SK-N-SH (cell line): ENCODE measurements at regions of chr20 and their contacts with region 1.

Region 1: DNA sequence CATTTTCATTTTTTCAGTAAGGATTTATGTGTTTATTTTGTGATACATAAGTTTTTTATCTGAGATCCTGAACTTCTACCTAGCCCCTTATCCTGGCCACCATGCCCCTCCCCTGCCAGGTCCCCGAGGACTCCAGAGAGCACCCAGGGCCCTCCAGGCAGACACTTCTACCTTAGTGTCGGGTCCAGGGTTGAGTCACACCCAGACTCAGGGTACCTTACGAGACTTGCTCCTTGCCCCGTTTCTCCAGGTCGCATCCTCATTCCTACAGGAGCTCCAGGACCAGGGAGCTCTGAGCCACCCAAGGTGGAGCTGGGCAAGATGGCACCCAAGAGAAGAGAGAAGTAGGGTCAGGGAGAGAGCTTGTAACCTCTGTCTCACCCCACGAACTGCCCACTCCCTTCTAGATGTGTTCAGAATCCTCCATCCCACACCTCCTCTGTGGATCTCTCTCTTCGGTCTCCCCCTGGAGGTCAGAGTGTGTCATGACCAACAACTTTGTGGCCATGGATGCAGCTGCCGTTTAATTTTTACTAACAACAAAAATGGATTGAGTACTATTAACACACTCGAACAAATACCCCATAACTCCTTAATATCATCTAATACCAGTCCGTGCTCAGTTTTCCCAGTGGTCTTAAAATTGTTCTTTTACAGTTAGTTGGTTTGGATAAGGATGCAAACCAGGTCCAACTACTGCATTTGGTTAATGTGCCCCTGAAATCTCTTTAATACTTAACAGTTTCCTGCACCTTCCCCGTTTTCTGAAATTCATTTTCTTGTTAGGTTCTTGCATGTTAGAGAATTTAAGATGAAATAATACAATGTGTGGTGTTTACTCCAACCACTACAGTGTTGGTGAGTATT is 130.6 kb upstream of the INSM1 start:
- DNase-seq: peak; percentile 71
- H3K4me3 ChIP-seq: no peak overlapping the region
- H3K27ac ChIP-seq: no peak overlapping the region
- H3K4me1 ChIP-seq: peaks cover 0 to 18% of the 10 kb centered on the region in 2 experiments; a peak in 2 of 4 replicates
- H3K27me3 ChIP-seq: no peaks in the 10 kb centered on the region; the same call in 1 of the 2 replicates
- CTCF ChIP-seq: peak; percentile 72
- EP300 ChIP-seq: no peak
- RAD21 ChIP-seq: peak; percentile 83

Region 2: DNA sequence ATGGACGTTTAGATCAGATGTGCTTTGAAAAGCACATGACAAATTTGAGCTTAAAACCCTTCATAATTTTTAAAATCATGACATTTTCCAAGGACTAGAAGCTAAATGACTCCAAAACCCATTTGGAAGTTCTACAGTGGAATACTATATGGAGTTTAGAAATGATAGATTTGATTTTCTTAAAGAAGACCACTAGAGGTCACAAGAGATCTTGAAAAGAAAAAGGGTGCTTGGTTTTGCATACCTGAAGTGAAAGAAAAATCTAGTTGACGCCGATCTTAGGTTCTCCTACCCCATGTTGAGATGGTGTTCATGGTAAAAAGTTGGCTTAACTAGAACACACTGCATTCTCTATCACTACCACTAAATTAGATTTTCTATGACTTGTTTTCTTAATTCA is 153.5 kb before region 1 on chr20:
- CTCF ChIA-PET with region 1: interaction called, 77 read pairs
- POLR2A ChIA-PET with region 1: no interaction called
- DNase-seq: peak; percentile 31
- H3K4me3 ChIP-seq: no peak overlapping the region
- H3K27ac ChIP-seq: no peak overlapping the region
- H3K4me1 ChIP-seq: no peaks in the 10 kb centered on the region; a peak in 2 of 4 replicates
- H3K27me3 ChIP-seq: peaks cover 4% of the 10 kb centered on the region; the same call in 1 of the 2 replicates
- CTCF ChIP-seq: peak; percentile 69
- EP300 ChIP-seq: no peak
- RAD21 ChIP-seq: peak; percentile 84

Region 3: GRCh38 chr20:20096421-20096820 is 140.9 kb before region 1 on chr20:
- CTCF ChIA-PET with region 1: interaction called, 39 read pairs
- POLR2A ChIA-PET with region 1: no interaction called
- DNase-seq: no peak
- H3K4me3 ChIP-seq: no peak overlapping the region
- H3K27ac ChIP-seq: no peak overlapping the region
- H3K4me1 ChIP-seq: no peaks in the 10 kb centered on the region; a peak in 1 of 4 replicates
- H3K27me3 ChIP-seq: peaks cover 6% of the 10 kb centered on the region
- CTCF ChIP-seq: no peak
- EP300 ChIP-seq: no peak
- RAD21 ChIP-seq: no peak

Region 4: DNA sequence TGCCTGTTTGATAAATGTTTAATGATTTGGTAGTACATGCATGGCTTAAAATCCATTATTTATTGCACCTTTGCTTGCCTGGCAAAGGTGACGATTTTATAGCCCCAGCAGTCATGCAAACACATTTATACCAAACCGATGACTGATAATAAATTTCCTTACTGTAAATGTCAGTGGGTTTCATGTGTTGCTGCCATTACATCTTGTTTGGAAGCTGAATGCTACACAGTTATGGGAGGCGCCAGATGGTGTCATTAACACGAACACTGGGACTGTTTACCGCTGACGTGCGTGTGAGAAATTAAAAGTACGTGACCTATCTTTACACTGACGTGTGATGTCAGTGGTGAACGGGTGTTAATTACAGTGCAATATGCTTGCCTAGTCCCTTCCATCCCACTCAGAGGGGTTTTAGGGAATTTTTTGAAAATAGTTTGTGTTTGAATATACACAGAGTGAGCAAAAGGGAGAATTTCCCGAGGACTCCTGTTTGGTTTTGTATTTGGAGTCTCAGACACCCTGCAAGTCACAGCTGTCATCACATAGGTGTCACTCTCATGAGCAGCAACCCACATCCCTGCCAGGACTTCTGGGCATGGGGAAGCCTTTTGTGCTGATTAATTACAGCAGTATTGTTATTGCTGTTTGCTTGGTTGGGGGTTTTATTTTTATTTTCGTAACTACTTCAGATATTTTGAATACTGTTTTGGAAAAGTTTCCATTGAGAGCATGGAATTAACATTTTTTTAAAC is 21.2 kb before region 1 on chr20:
- CTCF ChIA-PET with region 1: interaction called, 41 read pairs
- POLR2A ChIA-PET with region 1: no interaction called
- DNase-seq: no peak
- H3K4me3 ChIP-seq: no peak overlapping the region
- H3K27ac ChIP-seq: no peak overlapping the region
- H3K4me1 ChIP-seq: no peaks in the 10 kb centered on the region
- H3K27me3 ChIP-seq: no peaks in the 10 kb centered on the region
- CTCF ChIP-seq: no peak
- EP300 ChIP-seq: no peak
- RAD21 ChIP-seq: no peak

Region 5: GRCh38 chr20:20248620-20249200 is 11.4 kb after region 1 on chr20:
- CTCF ChIA-PET with region 1: interaction called, 55 read pairs
- POLR2A ChIA-PET with region 1: no interaction called
- DNase-seq: no peak
- H3K4me3 ChIP-seq: no peak overlapping the region
- H3K27ac ChIP-seq: no peak overlapping the region
- H3K4me1 ChIP-seq: peaks cover 0 to 6% of the 10 kb centered on the region in 2 experiments; a peak in 2 of 4 replicates
- H3K27me3 ChIP-seq: no peaks in the 10 kb centered on the region; the same call in 1 of the 2 replicates
- CTCF ChIP-seq: no peak
- EP300 ChIP-seq: no peak
- RAD21 ChIP-seq: no peak

Region 6: DNA sequence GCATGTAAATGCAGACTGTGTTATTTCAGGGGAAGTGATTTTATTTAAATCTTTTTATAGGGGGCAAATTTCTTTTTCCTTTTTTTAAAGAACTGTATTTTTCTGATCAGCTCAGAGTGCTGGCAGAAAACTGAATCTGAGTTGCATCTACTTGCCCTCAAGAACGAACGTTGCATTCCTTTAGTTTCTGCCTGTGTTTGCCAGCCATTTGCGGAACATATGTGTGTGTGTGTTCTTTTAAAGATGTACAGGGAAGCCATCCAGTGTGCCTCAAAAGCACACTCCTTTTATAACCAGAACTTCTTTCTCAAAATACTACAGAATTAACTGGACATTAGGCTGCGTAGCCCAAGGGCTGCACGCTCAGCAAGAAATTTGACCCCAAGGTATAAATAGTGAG is 104.7 kb after region 1 on chr20:
- CTCF ChIA-PET with region 1: interaction called, 10 read pairs
- POLR2A ChIA-PET with region 1: no interaction called
- DNase-seq: no peak
- H3K4me3 ChIP-seq: peak overlapping the region in 1 of 2 experiments; percentile 23; a peak in 1 of 4 replicates
- H3K27ac ChIP-seq: no peak overlapping the region
- H3K4me1 ChIP-seq: peaks cover 0 to 13% of the 10 kb centered on the region in 2 experiments; a peak in 2 of 4 replicates
- H3K27me3 ChIP-seq: no peaks in the 10 kb centered on the region; the same call in 1 of the 2 replicates
- CTCF ChIP-seq: no peak
- EP300 ChIP-seq: no peak
- RAD21 ChIP-seq: no peak